Tibial artery (tissue), 4 donors: ENCODE measurements at regions of chr6 and their contacts with region 1.

Region 1: DNA sequence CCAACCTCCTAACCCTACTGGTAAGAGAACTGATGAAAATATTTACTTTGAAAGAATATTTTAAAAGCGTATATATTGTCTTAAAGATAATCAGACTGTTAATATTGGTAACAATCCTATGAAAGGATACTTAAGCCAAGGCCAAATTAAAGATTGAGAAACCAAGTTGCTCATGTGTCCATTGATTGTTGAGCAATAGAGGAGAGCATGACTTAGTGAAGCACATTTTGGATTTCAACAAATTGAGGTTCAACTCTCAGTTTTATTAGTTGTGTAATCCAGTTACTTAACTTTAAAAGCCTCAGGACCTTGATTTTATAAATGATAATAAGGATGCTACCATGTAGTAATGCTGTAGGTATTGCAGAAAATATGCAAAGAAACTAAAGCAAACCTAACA is 56.8 kb downstream of the PRL start:
- DNase-seq: no peak
- H3K4me3 ChIP-seq: no peak overlapping the region
- H3K27ac ChIP-seq: no peak overlapping the region
- H3K4me1 ChIP-seq: peaks cover 0 to 18% (median 0%) of the 10 kb centered on the region in 4 donors
- H3K27me3 ChIP-seq: no peaks in the 10 kb centered on the region
- CTCF ChIP-seq: no peak

Region 2: GRCh38 chr6:23282252-23283021 is 1042.4 kb after region 1 on chr6:
- intact Hi-C with region 1: no loop called
- DNase-seq: no peak
- H3K4me3 ChIP-seq: no peak overlapping the region
- H3K27ac ChIP-seq: no peak overlapping the region
- H3K4me1 ChIP-seq: peaks cover 0 to 6% (median 0%) of the 10 kb centered on the region in 4 donors
- H3K27me3 ChIP-seq: no peaks in the 10 kb centered on the region
- CTCF ChIP-seq: no peak

Region 3: DNA sequence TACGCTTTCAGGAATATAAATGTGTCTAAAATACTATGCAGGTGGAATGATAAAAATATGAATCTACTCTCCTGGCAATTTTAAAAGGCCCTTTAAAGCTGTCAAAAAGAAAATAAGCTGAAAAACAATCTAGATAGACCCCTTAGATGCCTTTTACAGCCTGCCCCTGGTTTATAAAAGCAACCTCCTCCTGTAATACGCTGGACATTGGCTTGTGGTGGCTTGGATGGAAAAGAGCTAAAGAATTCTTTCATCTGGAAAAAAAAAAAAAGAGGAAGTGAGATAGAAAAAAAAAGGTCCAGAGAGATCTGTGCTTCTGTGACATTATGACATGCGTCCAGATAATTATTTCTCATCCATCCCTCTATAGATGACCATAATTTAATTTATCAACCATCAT is 1770.1 kb after region 1 on chr6:
- intact Hi-C with region 1: loop called (anchors 5 kb)
- DNase-seq: no peak
- H3K4me3 ChIP-seq: no peak overlapping the region
- H3K27ac ChIP-seq: no peak overlapping the region
- H3K4me1 ChIP-seq: no peaks in the 10 kb centered on the region
- H3K27me3 ChIP-seq: no peaks in the 10 kb centered on the region
- CTCF ChIP-seq: no peak